Psoas muscle (tissue), 8 donors: ENCODE measurements at regions of chrX and their contacts with region 1.

Region 1: DNA sequence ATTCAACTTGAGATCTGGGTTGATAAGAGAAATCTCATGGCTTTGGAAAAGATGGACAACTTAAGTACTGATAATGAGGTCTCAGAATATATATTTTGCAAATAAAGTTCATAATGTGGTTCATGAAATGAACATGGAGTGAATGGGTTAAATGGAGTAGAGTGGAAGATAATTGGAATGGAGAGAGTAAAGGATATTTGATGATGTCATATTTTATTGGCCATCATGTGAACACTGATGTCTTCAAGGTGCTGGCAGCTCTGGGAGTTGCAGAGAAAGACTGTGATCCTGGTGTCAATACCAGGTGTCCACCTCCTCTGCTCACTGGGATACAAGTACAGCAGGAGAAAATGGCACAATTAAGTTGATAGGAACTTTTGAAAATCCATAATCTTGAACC is 133.9 kb upstream of the ZXDA start:
- DNase-seq: no peak
- ATAC-seq: no peak
- H3K4me3 ChIP-seq: no peak overlapping the region
- H3K27ac ChIP-seq: no peak overlapping the region
- H3K4me1 ChIP-seq: no peaks in the 10 kb centered on the region
- H3K27me3 ChIP-seq: peaks cover 0 to 4% (median 0%) of the 10 kb centered on the region in 3 donors
- CTCF ChIP-seq: no peak

Region 2: DNA sequence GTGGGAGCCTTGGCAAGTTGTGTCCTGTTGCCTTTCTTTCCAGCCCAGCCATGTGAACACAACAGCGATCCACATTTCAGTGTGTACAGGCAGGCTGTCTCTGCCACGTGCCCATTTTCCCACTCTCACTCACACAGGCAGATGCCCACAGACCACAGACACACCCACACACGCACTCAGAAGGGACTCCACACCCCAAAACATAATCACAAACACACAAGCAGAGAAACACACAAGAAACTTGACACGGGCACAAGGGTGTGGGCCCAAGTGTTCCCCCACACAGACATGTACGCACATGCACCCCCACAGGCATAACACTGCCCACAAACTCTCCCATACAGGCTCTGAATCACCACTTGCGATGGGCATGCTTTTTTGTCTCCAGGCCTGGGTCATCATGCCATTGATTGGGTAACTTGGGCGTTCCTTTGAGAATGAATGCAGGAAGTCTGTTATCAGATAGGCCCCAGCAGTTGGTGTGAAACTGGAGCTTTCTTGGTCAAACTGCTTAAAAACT is 1230.8 kb before region 1 on chrX:
- intact Hi-C with region 1: loop called in 1 of 2 experiments (anchors 5 kb)
- DNase-seq: peak in 1 of 2 donors; percentile 23
- ATAC-seq: peak in 3 of 4 donors; percentile 44 to 63 (median 62)
- H3K4me3 ChIP-seq: no peak overlapping the region
- H3K27ac ChIP-seq: no peak overlapping the region
- H3K4me1 ChIP-seq: no peaks in the 10 kb centered on the region
- H3K27me3 ChIP-seq: peaks cover 0 to 11% (median 0%) of the 10 kb centered on the region in 3 donors
- CTCF ChIP-seq: no peak

Region 3: DNA sequence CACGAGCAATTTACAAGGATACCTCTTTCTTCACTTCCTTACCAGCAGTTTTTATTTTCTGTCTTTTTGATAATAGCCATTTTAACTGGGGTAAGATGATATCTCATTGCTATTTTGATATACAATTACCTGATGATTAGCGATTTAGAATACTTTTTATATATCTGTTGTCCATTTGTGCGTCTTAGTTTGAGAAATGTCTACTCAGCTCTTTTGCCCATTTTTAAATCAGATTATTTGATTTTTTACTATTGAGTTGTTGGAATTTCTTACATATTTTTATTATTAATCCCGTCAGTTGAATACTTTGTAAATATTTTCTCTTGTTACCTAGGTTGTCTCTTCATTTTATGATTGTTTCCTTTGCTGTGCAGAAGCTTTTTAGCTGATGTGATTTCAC is 905.5 kb before region 1 on chrX:
- intact Hi-C with region 1: no loop called
- DNase-seq: no peak
- ATAC-seq: no peak
- H3K4me3 ChIP-seq: no peak overlapping the region
- H3K27ac ChIP-seq: no peak overlapping the region
- H3K4me1 ChIP-seq: no peaks in the 10 kb centered on the region
- H3K27me3 ChIP-seq: peaks cover 0 to 4% (median 0%) of the 10 kb centered on the region in 3 donors
- CTCF ChIP-seq: no peak

Region 4: GRCh38 chrX:57848857-57849256 is 195.3 kb before region 1 on chrX:
- intact Hi-C with region 1: no loop called
- DNase-seq: no peak
- ATAC-seq: no peak
- H3K4me3 ChIP-seq: no peak overlapping the region
- H3K27ac ChIP-seq: no peak overlapping the region
- H3K4me1 ChIP-seq: no peaks in the 10 kb centered on the region
- H3K27me3 ChIP-seq: no peaks in the 10 kb centered on the region
- CTCF ChIP-seq: no peak

Region 5: GRCh38 chrX:57929373-57929772 is 114.8 kb before region 1 on chrX:
- intact Hi-C with region 1: no loop called
- DNase-seq: no peak
- ATAC-seq: peak in 3 of 4 donors; percentile 48 to 67 (median 60)
- H3K4me3 ChIP-seq: no peak overlapping the region
- H3K27ac ChIP-seq: no peak overlapping the region
- H3K4me1 ChIP-seq: no peaks in the 10 kb centered on the region
- H3K27me3 ChIP-seq: no peaks in the 10 kb centered on the region
- CTCF ChIP-seq: peak; percentile 55